Activated CD4-positive, alpha-beta memory T cell treated with anti-CD3 and anti-CD28 coated beads, Interleukin-2, amount 10 ng/mL, durations not matched to agents 7 days and 5 days (primary cell): ENCODE measurements at regions of chr10 and their contacts with region 1.

Region 1: GRCh38 chr10:61733358-61733940 is 70.7 kb downstream of the CABCOCO1 start:
- DNase-seq: no peak
- H3K4me3 Mint-ChIP-seq: no peak overlapping the region
- H3K27ac Mint-ChIP-seq: no peak overlapping the region
- H3K4me1 Mint-ChIP-seq: no peaks in the 10 kb centered on the region
- H3K27me3 Mint-ChIP-seq: peaks cover 68% of the 10 kb centered on the region

Region 2: GRCh38 chr10:61140765-61141392 is 592.6 kb before region 1 on chr10:
- CTCF ChIA-PET with region 1: interaction called, 10 read pairs
- POLR2A ChIA-PET with region 1: no interaction called
- DNase-seq: no peak
- H3K4me3 Mint-ChIP-seq: no peak overlapping the region
- H3K27ac Mint-ChIP-seq: no peak overlapping the region
- H3K4me1 Mint-ChIP-seq: no peaks in the 10 kb centered on the region
- H3K27me3 Mint-ChIP-seq: peaks cover 5% of the 10 kb centered on the region